Activated B cell treated with CpG ODN at 0.5 μM for 24 hours (primary cell): ENCODE measurements at regions of chr10 and their contacts with region 1.

Region 1: GRCh38 chr10:102064868-102065560 is at the start of gene HPS6:
- DNase-seq: peak; percentile 88
- ATAC-seq: peak; percentile 97
- H3K4me3 Mint-ChIP-seq: peak within 1 kb of the TSS; percentile 89
- H3K27ac Mint-ChIP-seq: peak within 1 kb of the TSS; percentile 90
- H3K4me1 Mint-ChIP-seq: peaks cover 24% of the 10 kb centered on the region
- H3K27me3 Mint-ChIP-seq: no peaks in the 10 kb centered on the region
- CTCF ChIP-seq: no peak
- total RNA-seq, gene HPS6: 22.8 and 23.0 TPM in 2 replicates

Region 2: DNA sequence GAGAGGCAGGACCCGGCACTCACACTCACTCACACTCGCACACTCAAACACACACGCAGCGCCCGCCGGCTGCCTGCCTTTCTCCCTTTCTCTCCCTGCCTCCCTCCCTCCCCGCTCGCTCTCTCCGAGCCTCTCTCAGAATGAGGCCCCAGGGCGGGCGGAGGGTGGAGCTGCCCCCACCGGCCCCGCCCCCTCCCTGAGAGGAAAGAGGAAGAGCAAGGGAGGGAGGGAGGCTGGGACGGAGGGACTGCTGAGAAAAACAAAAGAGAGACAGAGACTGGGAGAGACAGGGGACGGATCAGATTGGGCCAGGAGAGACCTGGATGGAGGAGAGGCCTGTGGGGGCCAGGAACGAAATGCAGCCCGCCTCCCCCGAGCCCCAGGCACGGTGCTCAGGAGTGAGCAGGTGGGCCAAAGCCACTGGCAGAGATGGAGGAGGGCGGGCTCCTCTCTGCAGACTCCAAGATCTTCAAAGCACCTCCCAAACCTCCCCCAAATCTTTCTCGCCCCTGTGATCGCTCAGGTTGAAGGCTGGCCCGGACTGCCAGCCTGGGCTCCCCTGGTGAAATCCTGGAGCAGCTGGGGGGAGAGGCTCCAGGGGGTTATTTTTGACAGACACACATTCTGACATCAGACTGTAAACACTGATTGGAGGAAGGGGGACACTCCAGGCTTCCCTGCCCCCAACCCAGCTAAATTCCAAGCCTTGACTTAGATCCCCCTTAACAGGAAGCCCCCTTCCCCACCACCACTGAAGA is 50.0 kb after region 1 on chr10:
- CTCF ChIA-PET with region 1: no interaction called
- POLR2A ChIA-PET with region 1: interaction called, 3 read pairs
- intact Hi-C with region 1: loop called (anchors 1 kb)
- DNase-seq: peak; percentile 70
- ATAC-seq: peak; percentile 78
- H3K4me3 Mint-ChIP-seq: peak overlapping the region; percentile 91
- H3K27ac Mint-ChIP-seq: peak overlapping the region; percentile 94
- H3K4me1 Mint-ChIP-seq: peaks cover 62% of the 10 kb centered on the region
- H3K27me3 Mint-ChIP-seq: no peaks in the 10 kb centered on the region
- CTCF ChIP-seq: no peak